Endothelial cell of umbilical vein (primary cell): ENCODE measurements at regions of chr5 and their contacts with region 1.

Region 1: DNA sequence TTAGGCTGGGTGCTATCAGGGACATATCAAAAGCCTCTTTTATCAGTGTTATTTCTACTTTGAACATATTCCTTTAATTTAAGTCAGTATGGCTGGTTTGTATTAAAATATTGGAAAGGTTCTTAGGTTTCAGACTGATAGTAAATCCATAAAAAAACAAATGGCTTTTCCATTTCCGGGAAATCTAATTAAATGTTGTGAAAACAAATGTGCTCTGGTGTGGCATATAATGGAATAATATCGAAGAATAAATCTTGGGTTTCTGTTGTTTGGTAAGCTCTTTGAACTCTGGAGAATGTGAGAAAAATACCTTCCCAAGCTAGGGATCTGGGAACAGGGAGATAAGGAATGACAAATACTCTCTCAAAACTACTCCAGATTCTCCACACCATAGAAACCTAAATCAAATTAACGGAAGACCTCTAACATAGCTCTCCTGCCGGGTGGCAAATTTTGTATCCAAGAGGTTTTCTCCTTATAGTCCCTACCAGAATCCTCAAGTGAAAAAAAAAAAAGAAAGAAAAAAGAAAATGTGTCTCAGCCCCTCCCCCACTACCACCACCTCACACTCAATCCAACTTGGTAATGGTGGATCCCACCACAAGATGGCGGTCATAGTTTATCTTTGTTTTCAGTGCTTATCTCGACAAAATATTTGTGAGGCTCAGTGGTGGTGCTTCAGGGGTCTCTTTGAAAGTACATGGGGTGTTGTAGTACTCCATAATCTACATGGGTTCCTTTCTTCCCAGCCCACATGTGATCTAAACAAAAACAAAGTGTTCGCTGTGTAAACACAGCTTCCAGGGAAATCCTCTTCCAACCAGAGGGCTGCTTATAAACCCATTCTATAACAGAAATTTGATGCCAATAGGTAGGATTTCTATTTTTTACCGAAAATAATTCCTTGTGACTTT is 54.6 kb upstream of the FST start:
- DNase-seq: no peak
- H3K4me3 ChIP-seq: no peak overlapping the region
- H3K27ac ChIP-seq: no peak overlapping the region
- H3K4me1 ChIP-seq: no peaks in the 10 kb centered on the region
- H3K27me3 ChIP-seq: no peaks in the 10 kb centered on the region
- CTCF ChIP-seq: peak in 1 of 2 donors; percentile 20
- POLR2A ChIP-seq: no peak

Region 2: GRCh38 chr5:54229041-54229780 is 803.4 kb after region 1 on chr5:
- CTCF ChIA-PET with region 1: interaction called, 6 read pairs
- POLR2A ChIA-PET with region 1: interaction called, 5 read pairs
- dilution Hi-C with region 1: no loop called
- intact Hi-C with region 1: loop called (anchors 1 kb)
- DNase-seq: peak; percentile 62
- H3K4me3 ChIP-seq: no peak overlapping the region
- H3K27ac ChIP-seq: no peak overlapping the region
- H3K4me1 ChIP-seq: no peaks in the 10 kb centered on the region
- H3K27me3 ChIP-seq: peaks cover 0 to 3% of the 10 kb centered on the region in 2 experiments
- CTCF ChIP-seq: peak; percentile 78 to 88
- POLR2A ChIP-seq: no peak